Gastrocnemius medialis (tissue), 4 donors: ENCODE measurements at regions of chr6 and their contacts with region 1.

Region 1: GRCh38 chr6:20092071-20092566 is 120.2 kb downstream of the MBOAT1 start:
- DNase-seq: no peak
- ATAC-seq: peak in 1 of 2 donors; percentile 58
- H3K4me3 ChIP-seq: no peak overlapping the region
- H3K27ac ChIP-seq: no peak overlapping the region
- H3K4me1 ChIP-seq: no peaks in the 10 kb centered on the region
- H3K27me3 ChIP-seq: no peaks in the 10 kb centered on the region
- CTCF ChIP-seq: peak; percentile 51 to 65 (median 61)
- POLR2A ChIP-seq: no peak

Region 2: DNA sequence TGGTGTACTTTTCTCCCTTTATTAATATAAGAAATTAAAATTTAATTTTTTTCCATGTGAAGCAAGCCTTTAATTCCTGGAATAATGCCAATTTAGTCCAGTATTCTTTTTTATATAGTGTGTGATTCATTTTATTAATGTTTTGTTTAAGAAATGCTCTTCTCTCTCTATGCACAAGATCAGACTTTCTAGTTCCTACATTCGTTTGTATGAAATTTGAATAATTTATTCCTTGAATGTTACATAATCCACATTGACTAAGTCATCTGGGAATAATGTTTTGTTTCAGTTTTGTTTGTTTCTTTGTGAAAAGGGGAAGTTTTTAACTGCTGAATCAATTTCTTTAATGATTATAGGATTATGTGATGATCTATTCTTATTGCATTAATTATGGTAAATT is 436.4 kb before region 1 on chr6:
- in situ Hi-C with region 1: no loop called
- intact Hi-C with region 1: no loop called
- DNase-seq: no peak
- ATAC-seq: no peak
- H3K4me3 ChIP-seq: no peak overlapping the region
- H3K27ac ChIP-seq: no peak overlapping the region
- H3K4me1 ChIP-seq: no peaks in the 10 kb centered on the region
- H3K27me3 ChIP-seq: no peaks in the 10 kb centered on the region
- CTCF ChIP-seq: no peak
- POLR2A ChIP-seq: no peak

Region 3: DNA sequence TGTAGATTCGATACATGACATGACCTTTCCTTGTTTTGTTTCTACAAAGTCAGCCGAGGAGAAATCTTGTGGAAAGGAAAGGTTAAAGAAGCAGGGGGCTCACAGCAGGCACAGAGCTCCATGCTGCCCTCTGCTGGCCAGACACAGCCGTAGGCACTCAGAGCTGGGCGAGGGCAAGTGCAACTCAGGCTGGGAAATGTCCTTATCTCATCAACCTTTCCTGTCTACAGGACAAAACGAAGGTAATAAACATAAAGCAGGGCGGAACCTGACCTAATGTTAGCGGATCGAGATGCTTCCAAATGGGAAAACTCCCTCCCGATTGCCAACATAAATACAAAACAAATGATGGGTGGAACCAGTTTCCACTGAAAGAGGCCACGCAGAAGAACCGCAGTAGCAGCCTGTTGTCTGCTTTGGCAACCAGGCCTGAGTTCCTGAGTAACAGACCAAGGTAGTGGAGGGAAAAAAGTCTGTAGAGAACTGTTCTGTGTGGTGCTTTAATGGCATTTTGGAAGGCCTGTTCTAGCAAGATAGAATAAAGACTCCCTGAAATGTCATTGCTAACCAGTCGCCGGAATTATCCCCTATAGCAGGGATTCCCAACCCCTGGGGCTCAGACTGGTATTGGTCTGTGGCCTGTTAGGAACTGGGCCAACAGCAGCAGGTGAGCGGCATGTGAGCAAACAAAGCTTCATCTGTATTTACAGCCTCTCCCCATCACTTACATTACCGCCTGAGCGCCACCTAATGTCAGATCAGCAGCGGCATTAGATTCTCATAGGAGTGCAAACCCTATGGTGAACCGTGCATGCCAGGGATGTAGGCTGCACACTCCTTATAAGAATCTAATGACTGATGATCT is 34.9 kb after region 1 on chr6:
- in situ Hi-C with region 1: no loop called
- intact Hi-C with region 1: loop called (anchors 1 kb)
- DNase-seq: peak; percentile 16 to 31
- ATAC-seq: peak; percentile 70 to 79
- H3K4me3 ChIP-seq: peak overlapping the region in 2 of 4 donors; percentile 20 to 26
- H3K27ac ChIP-seq: peak overlapping the region; percentile 25 to 70 (median 41)
- H3K4me1 ChIP-seq: peaks cover 5 to 6% of the 10 kb centered on the region in 2 donors
- H3K27me3 ChIP-seq: no peaks in the 10 kb centered on the region
- CTCF ChIP-seq: peak; percentile 74 to 94 (median 77)
- POLR2A ChIP-seq: no peak